ENCODE measurements at regions of chr4 and their contacts with region 1.

Region 1: DNA sequence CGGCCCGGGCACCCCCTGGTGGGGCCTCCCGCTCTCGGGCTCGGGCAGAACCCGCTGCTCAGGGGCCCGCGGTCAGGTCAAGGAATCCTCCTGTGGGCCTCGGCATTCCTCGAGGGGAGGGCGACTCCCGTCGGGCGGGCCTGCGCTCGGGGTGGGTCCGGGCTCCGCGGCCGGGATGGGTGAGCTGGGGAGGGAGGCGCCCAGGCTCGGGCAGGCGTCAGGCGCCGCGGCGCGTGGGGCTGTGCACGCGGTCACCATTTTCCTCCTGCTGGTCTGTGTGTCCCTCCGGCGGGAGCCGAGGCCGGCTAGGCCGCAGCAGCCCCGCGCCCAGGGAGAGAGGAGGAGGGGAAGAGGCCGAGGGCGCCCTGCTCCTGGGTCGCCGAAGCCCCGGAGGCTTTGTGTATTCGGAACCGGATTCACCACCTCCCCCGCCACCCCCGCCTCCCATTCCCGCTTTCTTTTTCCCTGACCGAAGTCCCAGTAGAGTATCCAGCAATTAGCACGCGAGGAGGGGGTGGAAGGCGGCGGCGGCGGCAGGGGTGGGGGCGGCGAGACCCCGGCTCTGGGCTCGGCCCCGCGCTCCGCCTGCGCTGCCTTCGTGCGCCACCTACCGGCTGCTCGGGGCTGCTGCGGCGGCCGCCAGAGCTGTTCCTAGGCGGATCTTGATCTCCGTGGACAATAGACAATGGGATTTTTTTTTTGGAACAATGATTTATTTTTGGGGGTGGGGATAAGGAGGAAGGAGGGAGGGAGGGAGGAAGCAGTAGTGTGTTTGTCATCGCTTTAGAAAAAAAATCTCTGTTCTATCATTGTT is 99.0 kb upstream of the MAML3 start:
- DNase-seq: peak; percentile 72 to 80
- ATAC-seq: peak; percentile 88

Region 2: DNA sequence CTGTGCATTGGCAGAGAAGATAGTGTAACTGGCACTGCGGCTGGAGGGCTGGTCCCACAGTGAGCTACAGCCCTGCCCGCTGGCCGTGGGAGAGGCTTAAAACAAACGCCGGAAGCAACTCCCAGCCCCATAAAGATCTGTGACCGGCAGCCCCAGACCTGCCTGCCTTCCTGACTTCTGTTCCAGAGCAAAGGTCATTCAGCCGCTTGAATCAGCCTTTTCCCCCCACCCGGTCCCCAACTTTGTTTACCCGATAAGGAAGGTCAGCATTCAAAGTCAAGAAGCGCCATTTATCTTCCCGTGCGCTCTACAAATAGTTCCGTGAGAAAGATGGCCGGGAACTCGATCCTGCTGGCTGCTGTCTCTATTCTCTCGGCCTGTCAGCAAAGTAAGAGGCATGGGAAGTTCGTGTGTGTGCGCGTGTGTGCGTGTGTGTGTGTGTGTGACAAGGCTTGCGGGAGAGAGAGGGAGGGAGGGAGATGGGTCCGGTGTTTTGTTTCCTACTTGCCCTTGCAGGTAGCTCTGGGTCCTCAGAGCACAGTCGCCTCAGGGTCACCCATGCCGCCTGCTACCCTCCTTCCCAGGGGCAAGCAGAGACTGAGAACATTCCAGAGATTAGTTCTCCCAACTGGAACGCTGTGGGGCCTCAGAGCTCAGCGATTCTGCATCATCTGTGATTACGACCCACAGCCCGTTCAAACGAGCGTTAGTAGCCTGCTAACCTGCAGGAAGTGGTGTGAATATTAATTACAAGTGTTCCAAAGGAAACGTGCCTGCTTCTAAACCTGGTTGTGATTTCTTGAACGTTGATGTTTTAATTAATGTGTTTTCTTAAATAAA is 587.0 kb before region 1 on chr4 and contains the start of gene MGST2:
- intact Hi-C with region 1: loop called in 1 of 2 experiments (anchors 10 kb)
- DNase-seq: peak; percentile 88 to 94
- ATAC-seq: peak; percentile 87
- total RNA-seq, gene MGST2: 99.1 to 129 TPM

Region 3: DNA sequence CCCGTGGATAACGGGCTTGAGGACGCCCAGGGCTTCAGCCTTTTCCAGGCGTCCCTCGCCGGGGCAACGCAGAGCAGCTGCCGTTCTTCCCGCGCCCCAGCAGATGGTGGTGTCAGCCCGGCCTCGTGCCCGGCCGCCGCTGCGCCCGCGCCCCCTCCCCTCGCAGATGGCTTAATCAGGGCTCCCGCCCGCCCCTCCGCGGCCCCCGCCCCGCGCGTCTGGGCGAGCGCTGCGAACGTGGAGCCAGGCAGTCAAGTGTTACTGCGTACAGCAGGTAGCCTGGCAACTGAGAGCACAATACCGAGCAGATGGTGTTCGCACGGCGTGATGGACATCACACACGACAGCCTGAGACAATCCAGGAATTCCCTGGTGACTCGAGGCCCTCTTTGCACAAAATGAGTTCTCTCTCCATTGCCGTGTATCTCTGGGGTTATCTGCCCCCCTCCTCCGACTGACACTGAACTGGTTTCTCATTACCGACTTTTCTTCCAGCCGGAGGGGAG is 518.0 kb before region 1 on chr4:
- intact Hi-C with region 1: loop called in 1 of 2 experiments (anchors 10 kb)
- DNase-seq: peak; percentile 67 to 75
- ATAC-seq: peak; percentile 88

Region 4: DNA sequence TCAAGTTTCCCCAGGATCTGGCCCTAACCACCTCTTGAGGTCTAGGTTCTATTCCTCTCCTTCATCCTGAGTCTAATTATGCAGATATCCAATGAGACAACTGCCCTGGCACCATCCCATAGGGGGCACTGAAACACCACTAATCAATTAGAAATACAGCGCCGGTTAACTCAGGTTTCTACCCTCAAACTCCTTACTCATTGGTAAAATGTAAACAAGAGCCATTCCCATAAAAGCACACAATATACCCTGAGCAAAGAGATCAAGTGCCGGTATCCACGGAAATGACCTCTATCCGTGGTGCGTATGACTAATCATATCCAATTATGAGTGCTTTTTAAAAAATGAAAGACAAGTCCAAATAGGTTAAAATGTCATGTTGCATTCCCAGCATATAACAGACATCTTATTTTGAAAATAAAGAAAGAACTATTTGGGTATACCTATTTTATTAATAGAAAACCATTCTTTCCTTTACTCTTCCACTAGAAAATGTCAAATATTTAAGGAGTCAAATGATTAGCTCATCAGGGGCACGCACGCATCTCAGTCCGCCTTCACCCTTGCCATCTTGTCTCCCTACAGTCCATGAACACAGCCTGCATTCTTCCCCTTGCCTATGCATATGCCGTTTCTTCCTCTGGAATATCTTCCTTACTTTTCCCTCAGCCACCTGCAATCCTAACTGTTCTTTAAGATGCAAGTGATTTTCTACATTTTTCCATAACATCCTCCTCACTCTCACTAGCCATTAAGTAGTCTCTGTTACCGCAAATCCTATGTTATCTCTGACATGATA is 240.1 kb before region 1 on chr4:
- intact Hi-C with region 1: loop called in 1 of 2 experiments (anchors 10 kb)
- DNase-seq: peak; percentile 62 to 78
- ATAC-seq: peak; percentile 98

Region 5: DNA sequence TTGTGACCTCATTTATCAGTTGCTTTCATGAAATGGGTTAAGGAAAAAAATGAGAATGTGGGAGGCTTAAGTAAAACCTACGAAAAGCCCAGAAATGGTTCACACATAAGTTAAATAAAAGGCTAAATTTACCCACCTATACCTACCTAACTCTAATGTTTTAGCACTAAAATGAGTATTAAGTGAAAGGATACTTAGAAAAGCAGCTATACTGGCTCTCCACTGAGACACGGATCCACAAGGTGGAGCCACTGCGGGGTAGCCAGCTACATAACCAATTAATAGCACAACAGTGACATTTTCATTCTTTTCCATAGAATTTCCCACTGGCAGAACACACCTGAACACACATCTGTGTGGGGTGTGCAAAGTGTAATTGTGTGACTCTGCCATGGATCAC is 200.9 kb before region 1 on chr4:
- intact Hi-C with region 1: loop called in 1 of 2 experiments (anchors 5 kb)
- DNase-seq: peak in 1 of 2 donors; percentile 69
- ATAC-seq: no peak

Region 6: GRCh38 chr4:140153718-140154571 is 99.0 kb before region 1 on chr4 and contains the start of gene MAML3:
- intact Hi-C with region 1: loop called (anchors 5 to 10 kb)
- DNase-seq: peak; percentile 94 to 96
- ATAC-seq: peak; percentile 60
- total RNA-seq, gene MAML3: 11.8 to 14.6 TPM

Measured in left colon (tissue), 2 donors.